ENCODE measurements at regions of chr20 and their contacts with region 1.

Region 1: DNA sequence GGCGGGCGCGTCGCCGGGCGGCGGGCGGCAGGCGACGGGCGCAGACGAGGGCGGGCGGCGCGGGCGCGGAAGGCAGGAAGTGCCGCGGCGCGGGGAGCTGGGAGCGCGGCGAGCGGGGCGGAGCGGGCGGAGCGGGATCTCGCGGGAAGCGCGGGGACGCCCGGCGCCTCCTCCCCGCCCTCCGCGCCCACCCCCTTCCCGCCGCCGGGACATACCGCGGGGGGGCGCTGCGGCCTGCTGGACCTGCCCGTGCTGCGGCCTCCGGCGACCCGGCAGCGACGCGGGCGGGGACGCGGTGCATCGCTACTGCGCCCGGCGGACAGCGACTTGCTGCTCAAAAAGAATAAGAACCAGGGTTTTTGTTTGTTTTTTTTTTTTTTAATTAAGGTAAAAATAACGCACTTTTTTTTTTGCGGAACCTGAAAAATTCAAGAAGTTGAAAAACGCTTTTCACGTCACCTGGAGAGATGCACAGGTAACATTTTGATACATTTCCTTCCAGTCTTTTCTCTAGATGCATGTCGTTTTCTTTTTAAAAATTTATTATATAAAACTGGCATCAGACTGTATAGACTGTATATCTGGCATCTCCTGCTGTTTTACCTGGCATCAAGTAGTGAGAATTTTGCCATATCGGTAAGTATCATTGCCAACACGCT is at the start of gene CENPB:
- DNase-seq: peak; percentile 86 to 94 (median 93)
- H3K4me3 ChIP-seq: peak within 1 kb of the TSS; percentile 69
- H3K27ac ChIP-seq: peak within 1 kb of the TSS; percentile 69 to 71
- H3K4me1 ChIP-seq: peaks cover 13% of the 10 kb centered on the region
- H3K27me3 ChIP-seq: no peaks in the 10 kb centered on the region
- CTCF ChIP-seq: peak; percentile 62 to 77 (median 65)
- EP300 ChIP-seq: no peak
- POLR2A ChIP-seq: no peak
- total RNA-seq, gene CENPB: 43.8 to 119 (median 97.8) TPM

Region 2: DNA sequence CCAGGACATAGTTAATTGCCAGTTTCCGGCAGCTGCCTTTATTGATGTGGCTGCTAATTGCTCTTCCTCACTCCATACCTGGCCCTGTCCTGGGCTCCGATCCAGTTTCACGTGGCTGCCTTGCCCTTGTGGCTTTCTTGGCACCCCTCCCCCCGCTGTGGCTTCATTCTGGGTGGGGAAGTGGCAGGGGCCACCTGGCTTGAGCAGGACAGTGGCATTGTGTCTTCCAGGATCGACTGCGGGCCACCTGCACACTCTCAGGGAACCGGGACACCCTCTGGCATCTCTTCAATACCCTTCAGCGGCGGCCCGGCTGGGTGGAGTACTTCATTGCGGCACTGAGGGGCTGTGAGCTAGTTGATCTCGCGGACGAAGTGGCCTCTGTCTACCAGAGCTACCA is 70.6 kb after region 1 on chr20:
- intact Hi-C with region 1: loop called in 1 of 4 experiments (anchors 5 kb)
- DNase-seq: no peak
- H3K4me3 ChIP-seq: no peak overlapping the region
- H3K27ac ChIP-seq: no peak overlapping the region
- H3K4me1 ChIP-seq: no peaks in the 10 kb centered on the region
- H3K27me3 ChIP-seq: no peaks in the 10 kb centered on the region
- CTCF ChIP-seq: no peak
- EP300 ChIP-seq: no peak
- POLR2A ChIP-seq: no peak